Activated CD8-positive, alpha-beta T cell treated with anti-CD3 and anti-CD28 coated beads, Interleukin-2, amount 10 ng/mL, durations not matched to agents 7 days and 5 days (primary cell): ENCODE measurements at regions of chr12 and their contacts with region 1.

Region 1: GRCh38 chr12:8644345-8645248 is 18.0 kb downstream of the MFAP5 start:
- DNase-seq: peak; percentile 81
- ATAC-seq: peak; percentile 89
- H3K4me3 Mint-ChIP-seq: peak overlapping the region; percentile 60
- H3K27ac Mint-ChIP-seq: peak overlapping the region; percentile 91
- H3K4me1 Mint-ChIP-seq: peaks cover 55% of the 10 kb centered on the region
- H3K27me3 Mint-ChIP-seq: peaks cover 6% of the 10 kb centered on the region

Region 2: DNA sequence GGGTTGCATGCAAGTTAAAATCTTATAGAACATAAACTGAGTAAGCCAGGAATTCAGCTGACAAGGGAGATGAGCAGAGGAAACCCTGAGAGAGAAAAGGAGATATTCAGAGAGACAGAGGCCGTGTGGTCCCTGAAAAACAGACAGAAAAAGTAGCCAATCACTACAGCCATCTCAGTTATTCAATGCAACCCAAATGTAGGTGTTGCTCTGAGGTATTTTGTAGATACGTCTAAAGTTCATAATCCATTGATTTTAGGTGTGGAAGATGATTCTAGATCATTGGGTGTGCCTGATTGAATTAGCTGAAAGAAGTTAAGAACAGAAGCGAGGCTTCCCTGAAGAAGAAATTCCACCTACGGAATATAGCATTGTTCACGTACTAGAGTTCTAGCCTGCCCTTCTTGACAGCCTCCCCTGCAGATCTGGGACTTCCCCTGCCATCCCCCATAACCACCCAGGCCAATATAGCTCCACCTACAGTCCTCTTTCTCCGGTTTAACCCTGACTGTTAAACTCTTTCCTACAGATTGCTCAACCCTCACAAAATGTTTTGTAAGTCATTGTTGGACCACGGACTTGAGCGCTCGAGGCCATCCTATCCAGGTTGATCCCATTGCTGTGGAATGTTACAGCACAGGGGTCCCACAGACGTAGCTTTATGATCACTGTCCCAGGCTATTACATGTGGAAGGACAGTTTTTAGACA is 53.6 kb before region 1 on chr12:
- CTCF ChIA-PET with region 1: no interaction called
- POLR2A ChIA-PET with region 1: no interaction called
- DNase-seq: no peak
- ATAC-seq: peak; percentile 57
- H3K4me3 Mint-ChIP-seq: no peak overlapping the region
- H3K27ac Mint-ChIP-seq: no peak overlapping the region
- H3K4me1 Mint-ChIP-seq: peaks cover 6% of the 10 kb centered on the region
- H3K27me3 Mint-ChIP-seq: no peaks in the 10 kb centered on the region

Region 3: GRCh38 chr12:8658346-8658745 is 13.7 kb after region 1 on chr12:
- CTCF ChIA-PET with region 1: interaction called, 25 read pairs
- POLR2A ChIA-PET with region 1: no interaction called
- DNase-seq: no peak
- ATAC-seq: no peak
- H3K4me3 Mint-ChIP-seq: no peak overlapping the region
- H3K27ac Mint-ChIP-seq: no peak overlapping the region
- H3K4me1 Mint-ChIP-seq: no peaks in the 10 kb centered on the region
- H3K27me3 Mint-ChIP-seq: peaks cover 12% of the 10 kb centered on the region

Region 4: DNA sequence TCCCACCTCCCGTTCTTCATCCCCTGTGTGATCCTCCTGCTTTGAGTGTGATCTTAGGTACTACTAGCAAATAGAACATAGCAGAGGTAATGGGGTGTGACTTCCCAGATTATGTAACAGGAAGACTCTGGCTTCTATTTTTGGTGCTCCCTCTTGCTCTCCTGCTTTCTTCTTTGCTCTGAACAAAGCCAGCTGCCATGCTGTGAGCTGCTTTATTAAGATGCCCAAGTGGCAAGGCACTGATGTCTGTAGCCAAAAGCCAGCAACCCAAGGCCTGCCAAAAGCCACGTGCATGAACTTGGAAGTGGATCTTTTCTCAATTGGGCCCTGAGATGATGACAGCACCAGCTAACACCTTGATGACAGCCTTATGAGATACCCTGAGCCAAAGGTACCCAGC is 23.8 kb after region 1 on chr12:
- CTCF ChIA-PET with region 1: no interaction called
- POLR2A ChIA-PET with region 1: no interaction called
- DNase-seq: no peak
- ATAC-seq: no peak
- H3K4me3 Mint-ChIP-seq: no peak overlapping the region
- H3K27ac Mint-ChIP-seq: no peak overlapping the region
- H3K4me1 Mint-ChIP-seq: no peaks in the 10 kb centered on the region
- H3K27me3 Mint-ChIP-seq: peaks cover 13% of the 10 kb centered on the region

Region 5: DNA sequence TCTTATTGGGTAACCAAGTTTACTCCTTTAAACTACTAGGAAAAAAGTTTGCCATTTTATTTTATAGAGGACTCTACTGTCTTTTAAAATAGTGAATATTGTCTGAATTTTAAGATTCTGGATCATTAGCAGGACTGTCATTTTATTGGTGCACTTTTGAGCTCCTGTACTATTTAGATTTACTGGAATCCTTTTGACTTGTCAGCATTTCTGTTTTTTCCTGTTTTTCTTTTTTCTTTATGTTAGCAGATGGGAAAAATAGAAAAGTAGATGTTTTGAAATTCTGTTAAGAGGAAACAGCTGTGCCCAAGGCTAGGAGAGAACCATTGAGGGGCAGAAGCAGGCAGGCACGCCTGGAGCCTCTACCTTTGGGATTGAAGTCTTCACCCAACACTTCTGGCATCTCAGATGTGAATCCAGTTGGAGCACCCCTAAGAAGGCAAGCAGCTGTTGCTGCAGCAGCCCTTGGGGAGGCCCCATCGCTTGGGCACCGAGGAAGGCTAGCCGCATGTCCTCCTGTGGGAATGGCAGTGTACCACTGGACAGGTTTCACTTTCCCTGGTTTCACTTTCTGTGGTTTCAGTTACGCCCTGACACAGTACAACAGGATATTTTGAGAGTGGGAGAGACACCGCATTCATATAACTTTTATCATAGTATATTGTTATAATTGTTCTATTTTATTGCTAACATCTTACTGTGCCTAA is 64.7 kb after region 1 on chr12:
- CTCF ChIA-PET with region 1: no interaction called
- POLR2A ChIA-PET with region 1: no interaction called
- DNase-seq: no peak
- ATAC-seq: no peak
- H3K4me3 Mint-ChIP-seq: no peak overlapping the region
- H3K27ac Mint-ChIP-seq: no peak overlapping the region
- H3K4me1 Mint-ChIP-seq: peaks cover 5% of the 10 kb centered on the region
- H3K27me3 Mint-ChIP-seq: no peaks in the 10 kb centered on the region